Stomach (tissue), 19 donors: ENCODE measurements at regions of chr10 and their contacts with region 1.

Region 1: DNA sequence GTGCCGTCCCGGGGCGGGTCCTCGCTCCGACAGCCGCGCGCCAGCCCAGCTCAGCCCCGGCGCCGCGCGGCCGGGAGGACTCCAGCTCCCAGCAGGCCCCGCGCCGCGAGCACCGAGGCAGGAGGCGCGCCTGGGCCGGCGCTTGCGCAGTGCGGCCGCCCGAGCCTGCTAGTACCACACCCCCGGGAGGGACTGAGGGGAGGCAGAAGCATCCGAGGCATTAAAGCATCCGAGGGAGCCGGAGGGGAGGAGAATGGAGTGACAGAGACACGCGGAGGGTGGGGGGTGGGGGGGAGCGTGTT is at the start of gene GRK5:
- DNase-seq: peak; percentile 96 to 99
- H3K4me3 ChIP-seq: peak within 1 kb of the TSS; percentile 63 to 88 (median 74)
- H3K27ac ChIP-seq: peak within 1 kb of the TSS; percentile 97 to 100 (median 98)
- H3K4me1 ChIP-seq: peaks cover 30 to 52% (median 49%) of the 10 kb centered on the region in 4 donors
- H3K27me3 ChIP-seq: no peaks in the 10 kb centered on the region
- CTCF ChIP-seq: no peak
- EP300 ChIP-seq: no peak
- POLR2A ChIP-seq: no peak
- total RNA-seq, gene GRK5: 18.1 to 56.2 (median 31.9) TPM

Region 2: DNA sequence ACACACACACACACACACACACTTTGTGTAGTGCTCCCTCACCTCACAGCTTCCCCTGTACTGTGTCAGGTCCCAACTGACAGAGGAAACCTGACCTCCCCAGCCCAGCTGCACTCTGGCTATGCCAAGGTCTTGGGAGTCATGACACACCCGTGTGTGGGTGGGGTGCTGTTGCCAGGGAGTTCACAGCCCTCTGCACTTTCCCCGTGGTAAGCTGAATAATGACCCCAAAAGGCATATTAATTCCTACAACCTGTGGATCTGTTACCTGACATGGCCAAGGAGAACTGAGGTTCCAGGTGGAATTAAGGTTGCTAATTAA is 186.7 kb before region 1 on chr10:
- intact Hi-C with region 1: no loop called
- DNase-seq: peak in 1 of 2 donors; percentile 12
- H3K4me3 ChIP-seq: no peak overlapping the region
- H3K27ac ChIP-seq: no peak overlapping the region
- H3K4me1 ChIP-seq: peaks cover 8 to 18% (median 9%) of the 10 kb centered on the region in 4 donors
- H3K27me3 ChIP-seq: no peaks in the 10 kb centered on the region
- CTCF ChIP-seq: no peak
- EP300 ChIP-seq: no peak
- POLR2A ChIP-seq: no peak

Region 3: DNA sequence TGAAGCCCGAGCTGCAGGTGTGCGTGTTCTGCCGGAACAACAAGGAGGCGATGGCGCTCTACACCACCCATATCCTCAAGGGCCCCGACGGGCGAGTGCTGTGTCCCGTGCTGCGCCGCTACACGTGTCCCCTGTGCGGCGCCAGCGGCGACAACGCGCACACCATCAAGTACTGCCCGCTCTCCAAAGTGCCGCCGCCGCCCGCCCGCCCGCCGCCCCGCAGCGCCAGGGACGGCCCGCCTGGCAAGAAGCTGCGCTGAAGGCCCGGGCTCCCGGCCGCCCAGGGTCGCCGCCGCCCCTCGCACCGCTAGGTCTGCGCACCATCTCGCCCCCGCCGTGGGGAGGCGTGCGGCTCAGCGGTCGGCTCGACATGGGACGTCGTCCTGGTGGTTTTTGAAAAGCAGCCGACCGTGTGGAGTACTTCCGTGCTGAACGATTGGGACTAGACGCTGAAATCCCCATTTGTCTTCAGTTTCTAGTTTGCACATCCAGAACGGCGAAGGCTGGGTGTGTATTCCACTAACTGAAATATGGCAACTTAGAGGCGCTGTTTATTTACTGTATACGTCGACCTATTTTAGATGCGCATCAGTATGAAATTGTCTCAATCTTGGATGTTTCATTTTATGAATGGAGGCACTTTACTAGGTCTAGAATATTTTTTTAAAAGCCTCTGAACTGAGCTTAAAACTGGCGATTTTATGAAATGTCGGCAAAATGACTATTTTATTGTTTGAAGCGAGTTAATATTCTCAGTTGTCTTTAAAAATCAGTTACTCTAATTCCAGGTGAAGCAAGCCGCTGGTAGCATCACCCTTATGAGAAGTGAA is 176.7 kb before region 1 on chr10:
- intact Hi-C with region 1: no loop called
- DNase-seq: peak; percentile 53 to 80
- H3K4me3 ChIP-seq: peak overlapping the region; percentile 64 to 94 (median 74)
- H3K27ac ChIP-seq: peak overlapping the region in 3 of 5 donors; percentile 77 to 87 (median 85)
- H3K4me1 ChIP-seq: peaks cover 26 to 49% (median 42%) of the 10 kb centered on the region in 4 donors
- H3K27me3 ChIP-seq: no peaks in the 10 kb centered on the region
- CTCF ChIP-seq: no peak
- EP300 ChIP-seq: no peak
- POLR2A ChIP-seq: no peak

Region 4: GRCh38 chr10:119305860-119306513 is 98.7 kb after region 1 on chr10:
- intact Hi-C with region 1: no loop called
- DNase-seq: peak; percentile 52 to 85
- H3K4me3 ChIP-seq: peak overlapping the region in 3 of 4 donors; percentile 16 to 29 (median 23)
- H3K27ac ChIP-seq: peak overlapping the region; percentile 66 to 81 (median 75)
- H3K4me1 ChIP-seq: peaks cover 29 to 88% (median 71%) of the 10 kb centered on the region in 4 donors
- H3K27me3 ChIP-seq: no peaks in the 10 kb centered on the region
- CTCF ChIP-seq: no peak
- EP300 ChIP-seq: no peak
- POLR2A ChIP-seq: no peak

Region 5: DNA sequence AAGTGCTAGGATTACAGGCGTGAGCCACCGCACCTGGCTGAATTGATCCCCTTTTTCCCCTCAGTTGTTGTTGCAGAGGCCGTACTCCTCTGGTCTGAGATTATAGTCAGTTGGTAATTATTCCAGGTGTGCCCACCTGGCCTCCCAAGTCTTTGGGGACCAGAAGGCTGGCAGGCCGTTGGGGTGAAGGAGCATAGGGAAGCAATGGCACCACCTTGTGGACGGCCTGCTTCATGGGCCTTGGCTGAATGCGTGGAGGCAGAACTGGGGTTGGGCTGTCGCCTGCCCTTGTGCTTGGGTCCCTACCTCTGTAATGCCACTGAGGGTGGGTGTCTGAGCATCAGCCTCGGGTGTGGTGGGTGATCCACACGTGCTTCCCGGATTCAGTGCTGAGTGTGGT is 209.5 kb after region 1 on chr10:
- intact Hi-C with region 1: loop called (anchors 10 kb)
- DNase-seq: peak; percentile 82 to 88
- H3K4me3 ChIP-seq: no peak overlapping the region
- H3K27ac ChIP-seq: peak overlapping the region in 4 of 5 donors; percentile 3 to 88 (median 32)
- H3K4me1 ChIP-seq: peaks cover 16 to 47% (median 35%) of the 10 kb centered on the region in 4 donors
- H3K27me3 ChIP-seq: no peaks in the 10 kb centered on the region
- CTCF ChIP-seq: peak in 6 of 7 experiments; percentile 55 to 89 (median 71)
- EP300 ChIP-seq: no peak
- POLR2A ChIP-seq: no peak

Region 6: GRCh38 chr10:119445311-119445934 is 238.1 kb after region 1 on chr10:
- intact Hi-C with region 1: loop called (anchors 10 kb)
- DNase-seq: peak; percentile 89 to 94
- H3K4me3 ChIP-seq: no peak overlapping the region
- H3K27ac ChIP-seq: peak overlapping the region in 2 of 5 donors; percentile 17 to 29
- H3K4me1 ChIP-seq: peaks cover 0 to 6% (median 3%) of the 10 kb centered on the region in 4 donors
- H3K27me3 ChIP-seq: no peaks in the 10 kb centered on the region
- CTCF ChIP-seq: peak in 5 of 7 experiments; percentile 78 to 98 (median 93)
- EP300 ChIP-seq: no peak
- POLR2A ChIP-seq: no peak